ENCODE measurements at regions of chr20 and their contacts with region 1.

Region 1: GRCh38 chr20:56151834-56152233 is 96.7 kb upstream of the MC3R start:
- DNase-seq: no peak
- H3K4me3 ChIP-seq: no peak overlapping the region
- H3K27ac ChIP-seq: no peak overlapping the region
- H3K4me1 ChIP-seq: no peaks in the 10 kb centered on the region
- H3K27me3 ChIP-seq: no peaks in the 10 kb centered on the region
- CTCF ChIP-seq: no peak
- POLR2A ChIP-seq: no peak

Region 2: GRCh38 chr20:55701467-55701866 is 450.4 kb before region 1 on chr20:
- intact Hi-C with region 1: loop called (anchors 5 kb)
- DNase-seq: no peak
- H3K4me3 ChIP-seq: no peak overlapping the region
- H3K27ac ChIP-seq: no peak overlapping the region
- H3K4me1 ChIP-seq: no peaks in the 10 kb centered on the region
- H3K27me3 ChIP-seq: no peaks in the 10 kb centered on the region
- CTCF ChIP-seq: no peak
- POLR2A ChIP-seq: no peak

Region 3: GRCh38 chr20:56391596-56392281 is 239.9 kb after region 1 on chr20 and contains the start of gene AURKA:
- intact Hi-C with region 1: no loop called
- DNase-seq: peak in 1 of 2 donors; percentile 96
- H3K4me3 ChIP-seq: peak within 1 kb of the TSS; percentile 88 to 90
- H3K27ac ChIP-seq: peak within 1 kb of the TSS; percentile 85
- H3K4me1 ChIP-seq: peaks cover 20% of the 10 kb centered on the region
- H3K27me3 ChIP-seq: no peaks in the 10 kb centered on the region
- CTCF ChIP-seq: no peak
- POLR2A ChIP-seq: no peak
- total RNA-seq, gene AURKA: 2.2 TPM

Region 4: DNA sequence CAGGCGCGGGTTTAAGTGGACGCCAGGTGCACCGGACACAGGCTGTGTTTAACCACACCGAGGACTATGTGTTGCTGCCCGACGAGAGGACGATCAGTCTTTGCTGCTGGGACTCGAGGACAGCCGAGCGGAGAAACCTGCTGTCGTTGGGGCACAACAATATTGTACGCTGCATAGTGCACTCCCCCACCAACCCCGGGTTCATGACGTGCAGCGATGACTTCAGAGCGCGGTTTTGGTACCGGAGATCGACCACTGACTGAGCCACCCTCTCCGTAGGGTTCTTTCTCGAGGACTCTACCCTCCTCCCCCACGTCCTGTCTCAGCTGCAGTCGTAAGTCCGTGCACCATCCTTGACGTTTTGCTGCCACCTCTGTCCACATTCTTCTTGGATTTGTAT is 251.6 kb after region 1 on chr20:
- intact Hi-C with region 1: no loop called
- DNase-seq: no peak
- H3K4me3 ChIP-seq: no peak overlapping the region
- H3K27ac ChIP-seq: no peak overlapping the region
- H3K4me1 ChIP-seq: peaks cover 4% of the 10 kb centered on the region
- H3K27me3 ChIP-seq: no peaks in the 10 kb centered on the region
- CTCF ChIP-seq: no peak
- POLR2A ChIP-seq: no peak

Measured in vagina (tissue), 2 donors.